ENCODE measurements at regions of chr1 and their contacts with region 1.

Region 1: GRCh38 chr1:24847995-24848881 is 81.8 kb downstream of the RUNX3 start:
- DNase-seq: peak; percentile 63
- H3K4me3 Mint-ChIP-seq: peak overlapping the region; percentile 53
- H3K27ac Mint-ChIP-seq: no peak overlapping the region
- H3K4me1 Mint-ChIP-seq: no peaks in the 10 kb centered on the region
- H3K27me3 Mint-ChIP-seq: no peaks in the 10 kb centered on the region
- CTCF ChIP-seq: peak; percentile 89

Region 2: DNA sequence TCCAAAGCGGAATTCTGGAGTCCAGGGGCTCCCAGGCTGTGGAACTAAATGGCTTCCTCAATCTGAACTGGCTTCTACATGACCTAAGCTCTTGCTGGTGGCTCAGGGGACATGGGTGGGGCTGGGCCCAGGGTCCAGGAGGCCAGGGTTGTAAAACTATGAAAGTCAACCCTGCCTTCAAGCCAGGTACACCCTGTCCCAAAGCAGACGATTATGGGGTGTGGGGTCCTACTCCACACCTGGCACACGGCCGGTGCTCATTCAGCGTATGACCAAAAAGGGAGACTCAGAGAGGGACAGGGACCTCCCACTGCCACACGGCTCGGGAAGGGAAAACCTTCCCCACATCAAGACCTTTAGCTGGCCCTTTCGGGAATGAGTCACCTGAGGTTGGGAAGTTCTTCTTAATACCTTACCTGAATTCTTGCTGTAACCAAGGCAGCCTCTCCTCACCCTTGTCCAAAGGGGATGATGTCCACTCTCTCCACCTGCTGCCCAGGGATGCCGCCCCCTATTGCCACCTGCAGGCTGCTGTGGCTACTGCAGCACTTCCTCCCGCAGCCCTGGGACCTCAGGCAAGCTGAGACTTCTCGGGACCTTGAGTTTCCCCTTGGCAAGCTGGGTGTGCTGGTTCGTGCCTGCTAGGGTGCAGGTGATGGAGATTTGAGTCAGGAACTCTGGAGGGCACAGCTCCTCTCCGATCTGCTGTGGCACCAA is 49.7 kb after region 1 on chr1:
- CTCF ChIA-PET with region 1: interaction called, 3 read pairs
- POLR2A ChIA-PET with region 1: no interaction called
- intact Hi-C with region 1: loop called (anchors 1 kb)
- DNase-seq: peak; percentile 57
- H3K4me3 Mint-ChIP-seq: no peak overlapping the region
- H3K27ac Mint-ChIP-seq: no peak overlapping the region
- H3K4me1 Mint-ChIP-seq: no peaks in the 10 kb centered on the region
- H3K27me3 Mint-ChIP-seq: peaks cover 11% of the 10 kb centered on the region
- CTCF ChIP-seq: peak; percentile 75

Region 3: DNA sequence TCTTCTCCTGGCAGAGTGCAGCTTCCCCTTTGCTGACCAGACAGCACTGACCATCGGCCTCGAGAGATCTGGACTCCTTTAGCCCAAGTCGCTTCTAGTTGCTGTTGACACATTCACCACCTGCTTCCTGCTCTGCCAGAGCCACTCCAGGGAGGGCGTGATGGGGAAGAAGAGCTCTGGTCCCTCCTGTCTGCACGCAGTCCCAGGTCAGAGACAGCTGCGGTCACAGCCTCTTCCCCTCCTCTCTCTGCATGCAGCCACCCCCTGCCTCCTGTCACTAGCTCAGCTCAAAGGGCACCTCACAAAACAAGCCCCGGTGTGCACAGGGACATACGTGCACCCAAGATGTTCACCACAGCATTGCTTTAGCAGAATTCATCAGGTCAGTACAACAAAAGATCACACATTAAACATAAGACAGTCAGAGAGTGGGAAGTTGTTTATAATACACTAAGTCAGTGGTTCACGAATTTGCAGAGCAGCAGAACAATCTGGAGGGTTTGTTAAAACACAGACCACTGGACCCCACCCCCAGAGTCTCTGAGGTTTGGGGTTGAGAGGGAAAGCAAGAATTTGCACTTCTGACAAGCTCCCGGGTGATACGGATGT is 251.2 kb after region 1 on chr1:
- CTCF ChIA-PET with region 1: interaction called, 29 read pairs
- POLR2A ChIA-PET with region 1: no interaction called
- intact Hi-C with region 1: loop called (anchors 2 kb)
- DNase-seq: no peak
- H3K4me3 Mint-ChIP-seq: no peak overlapping the region
- H3K27ac Mint-ChIP-seq: no peak overlapping the region
- H3K4me1 Mint-ChIP-seq: no peaks in the 10 kb centered on the region
- H3K27me3 Mint-ChIP-seq: peaks cover 36% of the 10 kb centered on the region
- CTCF ChIP-seq: no peak

Measured in MCF 10A (cell line).